ENCODE measurements at regions of chr5 and their contacts with region 1.

Region 1: GRCh38 chr5:96807075-96807654 is 580 bp downstream of the ERAP1 start:
- DNase-seq: peak in 1 of 9 donors; percentile 67
- ATAC-seq: peak; percentile 17
- H3K4me3 ChIP-seq: peak overlapping the region; percentile 85
- H3K4me3 Mint-ChIP-seq: peak overlapping the region; percentile 90 to 100 (median 96)
- H3K27ac ChIP-seq: peak overlapping the region; percentile 99
- H3K27ac Mint-ChIP-seq: peak overlapping the region; percentile 98 to 100 (median 99)
- H3K4me1 ChIP-seq: peaks cover 40 to 69% of the 10 kb centered on the region in 2 donors
- H3K4me1 Mint-ChIP-seq: peaks cover 57 to 92% (median 89%) of the 10 kb centered on the region in 7 donors
- H3K27me3 ChIP-seq: no peaks in the 10 kb centered on the region
- H3K27me3 Mint-ChIP-seq: peaks cover 0 to 2% (median 0%) of the 10 kb centered on the region in 5 donors

Region 2: GRCh38 chr5:96781031-96781937 is 25.9 kb before region 1 on chr5:
- CTCF ChIA-PET with region 1: no interaction called
- POLR2A ChIA-PET with region 1: interaction called, 6 read pairs
- intact Hi-C with region 1: loop called in 1 of 2 experiments (anchors 2 kb)
- DNase-seq: no peak
- ATAC-seq: no peak
- H3K4me3 ChIP-seq: no peak overlapping the region
- H3K4me3 Mint-ChIP-seq: no peak overlapping the region
- H3K27ac ChIP-seq: no peak overlapping the region
- H3K27ac Mint-ChIP-seq: peak overlapping the region in 8 of 9 donors; percentile 27 to 77 (median 64)
- H3K4me1 ChIP-seq: no peaks in the 10 kb centered on the region
- H3K4me1 Mint-ChIP-seq: peaks cover 0 to 15% (median 4%) of the 10 kb centered on the region in 7 donors
- H3K27me3 ChIP-seq: no peaks in the 10 kb centered on the region
- H3K27me3 Mint-ChIP-seq: no peaks in the 10 kb centered on the region

Region 3: DNA sequence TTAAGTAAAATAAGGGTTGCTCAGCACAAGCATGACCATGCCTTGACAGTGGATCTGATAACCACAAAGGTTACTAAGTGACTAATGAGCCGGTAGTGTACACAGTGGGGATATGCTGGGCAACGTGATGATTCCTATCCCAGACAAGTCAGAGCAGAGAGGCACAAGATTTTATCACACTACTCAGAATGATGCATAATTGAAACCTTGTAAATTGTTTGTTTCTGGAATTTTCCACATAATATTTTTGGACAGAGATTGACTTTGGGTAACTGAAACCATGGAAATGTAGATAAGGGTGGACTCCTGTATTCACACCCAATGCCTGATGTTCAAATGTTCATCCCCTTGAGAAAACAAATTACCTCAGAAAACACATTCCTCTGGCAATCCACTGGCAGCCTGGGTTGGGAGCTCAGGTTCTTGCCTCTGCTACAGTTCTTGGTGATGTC is 16.8 kb after region 1 on chr5:
- CTCF ChIA-PET with region 1: interaction called, 25 read pairs
- POLR2A ChIA-PET with region 1: interaction called, 212 read pairs
- intact Hi-C with region 1: loop called (anchors 1 to 2 kb)
- DNase-seq: no peak
- ATAC-seq: peak; percentile 48
- H3K4me3 ChIP-seq: no peak overlapping the region
- H3K4me3 Mint-ChIP-seq: no peak overlapping the region
- H3K27ac ChIP-seq: no peak overlapping the region
- H3K27ac Mint-ChIP-seq: peak overlapping the region in 1 of 9 donors; percentile 35
- H3K4me1 ChIP-seq: peaks cover 0 to 29% of the 10 kb centered on the region in 2 donors
- H3K4me1 Mint-ChIP-seq: peaks cover 15 to 49% (median 46%) of the 10 kb centered on the region in 7 donors
- H3K27me3 ChIP-seq: no peaks in the 10 kb centered on the region
- H3K27me3 Mint-ChIP-seq: peaks cover 0 to 21% (median 0%) of the 10 kb centered on the region in 5 donors

Region 4: DNA sequence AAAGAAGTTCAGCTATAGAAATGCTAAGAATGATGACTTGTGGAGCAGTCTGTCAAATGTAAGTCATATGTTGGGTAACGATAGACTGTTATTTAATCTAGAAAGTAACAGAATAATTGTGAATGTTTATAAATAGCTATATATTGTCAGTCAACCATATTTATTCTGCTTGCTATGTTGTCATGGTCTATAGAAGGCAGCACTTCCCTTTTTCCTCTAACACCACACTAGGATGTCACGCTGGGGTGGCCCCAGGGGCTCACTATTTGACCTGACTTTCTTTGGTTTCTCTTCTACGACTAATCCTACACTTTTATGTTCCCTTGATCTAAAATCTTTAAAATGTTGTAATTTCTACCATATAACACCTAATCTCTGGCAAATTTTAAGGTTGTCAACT is 89.6 kb after region 1 on chr5:
- CTCF ChIA-PET with region 1: interaction called, 3 read pairs
- POLR2A ChIA-PET with region 1: interaction called, 15 read pairs
- intact Hi-C with region 1: no loop called
- DNase-seq: no peak
- ATAC-seq: peak; percentile 73
- H3K4me3 ChIP-seq: peak overlapping the region; percentile 36
- H3K4me3 Mint-ChIP-seq: peak overlapping the region; percentile 67 to 88 (median 79)
- H3K27ac ChIP-seq: peak overlapping the region; percentile 69
- H3K27ac Mint-ChIP-seq: peak overlapping the region; percentile 83 to 98 (median 94)
- H3K4me1 ChIP-seq: peaks cover 6 to 17% of the 10 kb centered on the region in 2 donors
- H3K4me1 Mint-ChIP-seq: peaks cover 26 to 71% (median 68%) of the 10 kb centered on the region in 7 donors
- H3K27me3 ChIP-seq: no peaks in the 10 kb centered on the region
- H3K27me3 Mint-ChIP-seq: no peaks in the 10 kb centered on the region

Region 5: DNA sequence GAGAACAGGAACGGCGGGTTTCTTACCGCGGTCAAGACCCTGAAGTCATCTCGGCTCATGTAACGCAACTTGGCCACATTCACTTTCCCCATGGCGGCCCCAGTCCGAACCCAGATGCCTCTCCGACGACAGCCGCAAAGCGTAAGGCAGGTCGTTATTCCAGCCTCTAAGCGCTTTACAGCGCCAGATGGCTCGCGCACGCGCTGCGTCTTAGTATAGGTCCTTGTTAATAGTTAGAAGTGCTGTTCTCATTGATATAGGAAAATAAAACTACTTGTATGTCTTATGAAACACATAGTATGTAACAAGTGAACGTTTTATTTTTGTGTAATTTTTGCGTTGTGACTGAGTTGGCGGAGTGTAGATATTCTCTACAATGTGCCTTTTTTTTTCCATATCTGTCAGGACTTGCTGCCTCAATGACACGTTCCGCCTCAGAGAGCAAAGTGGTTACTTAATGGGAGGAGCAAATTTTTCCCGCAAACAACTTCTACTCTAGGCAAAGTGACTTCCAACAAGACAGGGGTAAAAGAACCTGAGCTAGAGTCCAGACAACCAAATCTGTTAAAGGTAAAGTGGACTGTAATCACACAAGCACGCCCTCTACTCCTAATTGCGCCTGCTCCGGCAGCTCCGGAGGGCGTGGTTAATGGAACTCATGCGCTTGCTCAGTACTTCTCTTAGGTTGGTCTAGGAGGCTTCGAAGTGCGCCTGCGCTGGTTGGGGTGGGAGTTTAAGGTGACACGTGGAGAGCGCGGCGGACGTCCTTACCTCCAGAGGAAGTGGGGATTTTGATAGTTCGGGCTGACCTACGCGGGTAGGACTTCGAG is 376.1 kb after region 1 on chr5 and contains the start of gene RIOK2:
- CTCF ChIA-PET with region 1: no interaction called
- POLR2A ChIA-PET with region 1: no interaction called
- intact Hi-C with region 1: loop called (anchors 1 kb)
- DNase-seq: peak; percentile 77 to 93 (median 91)
- ATAC-seq: peak; percentile 96
- H3K4me3 ChIP-seq: peak within 1 kb of the TSS; percentile 82
- H3K4me3 Mint-ChIP-seq: peak within 1 kb of the TSS; percentile 89 to 98 (median 94)
- H3K27ac ChIP-seq: peak within 1 kb of the TSS; percentile 94
- H3K27ac Mint-ChIP-seq: peak within 1 kb of the TSS; percentile 99 to 100 (median 100)
- H3K4me1 ChIP-seq: peaks cover 4 to 14% of the 10 kb centered on the region in 2 donors
- H3K4me1 Mint-ChIP-seq: peaks cover 23 to 54% (median 44%) of the 10 kb centered on the region in 7 donors
- H3K27me3 ChIP-seq: no peaks in the 10 kb centered on the region
- H3K27me3 Mint-ChIP-seq: peaks cover 0 to 3% (median 0%) of the 10 kb centered on the region in 5 donors
- total RNA-seq, gene RIOK2: 18.8 to 36.0 (median 28.5) TPM